Posterior cingulate gyrus (tissue), 11 donors: ENCODE measurements at regions of chr6 and their contacts with region 1.

Region 1: DNA sequence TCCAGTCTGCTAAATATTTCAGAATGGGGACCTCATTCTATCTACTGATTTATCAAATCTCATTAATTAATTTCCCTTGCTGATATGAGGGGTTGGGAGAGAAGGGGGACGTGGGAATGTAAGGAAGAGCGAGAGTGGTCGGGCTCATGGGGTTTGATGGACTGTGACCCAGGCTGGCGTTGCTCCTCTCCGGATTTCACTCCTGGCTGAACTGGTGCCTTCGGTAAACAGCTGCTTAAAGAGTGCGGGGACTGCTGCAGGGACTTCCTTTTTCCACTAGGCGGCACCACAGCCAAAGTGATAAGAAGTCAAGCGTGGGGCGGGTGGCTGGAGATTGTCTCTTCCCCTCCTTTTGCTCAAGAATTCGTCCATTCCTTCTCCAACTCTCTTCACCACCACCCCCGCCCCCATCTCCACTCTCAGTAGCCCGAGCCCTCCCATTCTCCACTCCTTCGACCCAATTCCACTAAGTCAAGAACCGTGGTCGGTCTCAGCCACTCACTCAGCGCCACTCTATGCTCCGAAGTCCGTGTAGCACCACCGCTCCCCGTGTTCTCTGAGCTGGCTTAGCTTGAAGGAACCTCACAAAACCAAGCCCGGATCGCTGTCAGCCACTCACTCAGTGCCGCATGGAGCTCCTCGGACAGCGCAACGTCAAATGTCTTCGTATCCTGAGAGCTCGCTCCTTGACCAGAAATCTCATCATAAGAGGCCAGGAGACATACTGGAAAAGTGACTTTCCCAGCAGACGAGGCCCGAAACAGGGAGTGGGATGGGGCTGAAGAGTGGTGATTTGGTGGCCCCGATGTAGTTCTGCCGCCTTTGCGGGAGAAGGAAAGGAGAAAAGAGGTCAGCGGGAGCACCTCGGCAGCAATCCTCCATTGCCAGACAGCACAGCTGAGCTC is 9.7 kb downstream of the TRIM31 start:
- DNase-seq: peak; percentile 56 to 96 (median 82)

Region 2: GRCh38 chr6:29827579-29828470 is 275.4 kb before region 1 on chr6 and contains the start of gene HLA-G:
- intact Hi-C with region 1: no loop called
- DNase-seq: peak in 1 of 10 donors; percentile 78

Region 3: DNA sequence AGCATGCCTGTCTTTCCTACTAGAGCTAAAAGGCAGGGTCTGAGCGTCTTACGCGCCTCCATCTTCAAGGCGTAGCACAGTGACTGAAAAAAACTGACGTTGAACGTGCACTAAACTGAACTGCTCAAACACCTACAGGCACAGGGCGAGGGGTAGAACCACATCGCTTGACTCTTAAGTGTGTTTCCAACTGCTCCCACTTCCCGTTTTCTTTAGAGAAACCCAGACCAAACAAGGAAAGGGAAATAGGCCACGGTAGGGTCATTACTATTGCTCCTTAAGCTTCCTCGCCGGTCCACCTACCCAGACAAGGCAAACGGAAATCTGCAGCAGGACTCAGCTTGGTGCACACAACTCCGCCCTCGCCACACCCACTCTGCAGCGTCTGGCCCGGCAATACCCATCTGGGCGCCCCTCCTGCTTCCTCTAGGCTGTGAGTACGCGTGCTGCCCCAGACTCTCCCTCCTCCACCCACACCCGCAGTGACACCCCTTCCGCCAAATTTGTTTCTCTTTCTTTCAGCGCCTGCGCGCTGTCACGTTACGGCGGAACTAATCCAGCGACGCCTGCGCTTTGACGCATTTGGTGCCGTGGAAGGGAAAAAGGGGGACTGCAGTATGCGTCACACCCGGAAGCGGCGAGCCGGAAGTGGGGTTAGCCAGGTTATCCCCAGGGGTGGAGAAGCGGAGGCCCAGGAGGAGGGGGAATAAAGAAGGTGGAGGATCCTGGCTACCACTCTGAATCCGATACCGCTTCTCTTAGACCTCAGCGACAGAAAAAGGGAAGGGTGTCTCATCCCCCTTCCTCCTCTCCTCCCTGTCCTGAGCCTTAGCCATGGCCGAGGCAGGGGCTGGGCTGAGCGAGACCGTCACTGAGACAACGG is 36.4 kb before region 1 on chr6 and contains the start of gene PPP1R11:
- intact Hi-C with region 1: loop called (anchors 2 kb)
- DNase-seq: peak; percentile 98 to 100 (median 99)

Region 4: GRCh38 chr6:30130887-30131862 is 28.0 kb after region 1 on chr6:
- intact Hi-C with region 1: loop called (anchors 1 kb)
- DNase-seq: peak in 6 of 10 donors; percentile 30 to 91 (median 48)

Region 5: DNA sequence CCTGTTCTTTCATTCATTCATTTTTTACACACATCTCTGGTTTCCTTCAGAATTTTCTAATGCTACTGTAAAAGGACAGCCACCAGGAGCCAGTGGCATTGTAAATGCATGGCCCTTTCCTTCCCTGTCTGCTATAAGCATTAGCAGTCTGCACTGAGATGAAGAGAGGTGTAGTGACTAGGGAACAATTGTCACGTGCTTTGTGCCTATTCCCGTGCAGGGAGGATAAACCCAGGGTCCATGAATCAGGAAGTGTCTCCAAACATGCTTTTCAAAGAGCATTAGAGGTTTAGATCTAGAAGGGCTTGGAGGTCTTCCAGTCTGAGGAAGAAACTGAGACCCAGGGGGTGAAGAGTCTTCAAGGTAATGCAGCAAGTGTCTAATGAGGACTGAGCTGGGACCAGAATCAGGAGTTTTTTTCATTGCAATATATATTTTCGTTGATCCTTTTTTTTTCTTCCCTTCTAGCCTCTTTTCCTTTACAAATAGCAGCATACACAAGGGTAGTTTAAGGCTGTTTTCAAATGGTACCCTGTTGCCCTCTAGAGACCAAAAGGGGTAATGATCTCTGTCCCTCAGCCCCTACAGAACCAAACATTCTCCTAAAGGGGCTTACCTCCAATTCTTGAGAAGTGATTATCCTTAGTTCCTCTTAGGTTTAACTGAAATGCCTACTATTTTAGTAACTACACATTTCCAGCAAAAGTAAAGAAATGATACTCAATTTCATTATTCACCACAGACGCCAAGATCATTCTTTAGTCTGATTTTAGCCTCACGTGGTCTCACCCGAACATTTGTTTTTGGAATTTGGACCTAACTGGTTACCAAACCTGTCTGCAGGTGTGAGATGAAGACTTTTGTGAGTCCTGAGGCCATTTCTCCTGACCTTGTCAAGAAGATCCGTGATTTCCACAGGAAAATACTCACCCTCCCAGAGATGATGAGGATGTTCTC is 66.7 kb after region 1 on chr6:
- intact Hi-C with region 1: loop called (anchors 10 kb)
- DNase-seq: no peak

Region 6: GRCh38 chr6:30781743-30782424 is 678.7 kb after region 1 on chr6:
- intact Hi-C with region 1: no loop called
- DNase-seq: peak; percentile 78 to 97 (median 86)